PC-3 (cell line): ENCODE measurements at regions of chr1 and their contacts with region 1.

Region 1: GRCh38 chr1:168082008-168082876 is 54.5 kb downstream of the GPR161 start:
- DNase-seq: peak; percentile 89
- ATAC-seq: peak; percentile 92
- H3K4me3 ChIP-seq: no peak overlapping the region
- H3K27ac ChIP-seq: no peak overlapping the region
- H3K4me1 ChIP-seq: peaks cover 6% of the 10 kb centered on the region; the same call in 1 of the 2 replicates
- H3K27me3 ChIP-seq: no peaks in the 10 kb centered on the region
- CTCF ChIP-seq: peak; percentile 97

Region 2: GRCh38 chr1:167797015-167797414 is 285.2 kb before region 1 on chr1:
- CTCF ChIA-PET with region 1: interaction called, 10 read pairs
- POLR2A ChIA-PET with region 1: no interaction called
- intact Hi-C with region 1: no loop called
- DNase-seq: peak; percentile 95
- ATAC-seq: peak; percentile 83
- H3K4me3 ChIP-seq: no peak overlapping the region
- H3K27ac ChIP-seq: peak overlapping the region; percentile 82
- H3K4me1 ChIP-seq: peaks cover 45% of the 10 kb centered on the region
- H3K27me3 ChIP-seq: no peaks in the 10 kb centered on the region
- CTCF ChIP-seq: 0 out of 2 replicates have a peak, but pooled peaks have one; percentile 32

Region 3: DNA sequence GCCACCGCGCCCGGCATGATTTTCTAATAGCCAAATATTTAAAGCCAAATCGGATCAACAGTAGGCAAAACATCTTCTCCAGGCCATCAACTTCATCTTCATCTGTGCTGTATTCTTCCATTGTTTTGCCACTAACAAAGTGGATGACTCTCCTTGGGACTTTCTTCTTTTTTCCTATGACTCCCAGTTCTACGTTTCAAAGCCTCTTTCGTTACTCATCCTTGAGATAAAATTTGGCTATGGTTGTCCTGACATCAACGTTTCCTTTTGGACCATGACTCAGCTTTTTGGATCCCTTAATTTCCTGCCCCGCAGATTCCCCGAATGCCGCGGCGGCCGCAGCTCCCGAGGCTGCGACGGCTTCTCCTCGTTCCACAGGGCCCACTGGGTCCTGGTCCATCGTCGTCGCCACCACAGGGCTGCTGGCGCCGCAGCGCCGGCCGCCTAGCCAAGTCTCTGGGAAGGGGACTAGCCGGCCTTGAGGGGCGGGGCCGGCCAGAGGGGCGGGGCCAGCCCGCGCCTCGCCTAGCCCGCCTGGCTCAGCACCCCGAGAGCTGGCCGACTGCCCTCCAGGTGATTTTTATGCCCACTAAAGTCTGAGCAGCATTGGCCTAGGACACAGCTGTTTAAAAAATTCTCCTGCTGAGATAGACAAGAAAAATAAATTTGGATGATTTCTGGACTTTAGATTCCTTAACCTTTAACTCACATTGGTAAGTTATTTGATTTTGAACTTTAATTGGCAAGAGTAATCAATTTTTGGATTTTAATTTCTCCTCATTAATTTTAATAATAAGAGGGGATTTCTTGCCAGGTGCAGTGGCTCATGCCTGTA is 262.2 kb before region 1 on chr1:
- CTCF ChIA-PET with region 1: no interaction called
- POLR2A ChIA-PET with region 1: no interaction called
- intact Hi-C with region 1: loop called (anchors 5 kb)
- DNase-seq: peak; percentile 93
- ATAC-seq: peak; percentile 99
- H3K4me3 ChIP-seq: peak overlapping the region; percentile 56
- H3K27ac ChIP-seq: peak overlapping the region; percentile 83
- H3K4me1 ChIP-seq: peaks cover 11% of the 10 kb centered on the region
- H3K27me3 ChIP-seq: no peaks in the 10 kb centered on the region
- CTCF ChIP-seq: no peak

Region 4: GRCh38 chr1:168121401-168122011 is 39.3 kb after region 1 on chr1:
- CTCF ChIA-PET with region 1: no interaction called
- POLR2A ChIA-PET with region 1: no interaction called
- intact Hi-C with region 1: no loop called
- DNase-seq: no peak
- ATAC-seq: no peak
- H3K4me3 ChIP-seq: no peak overlapping the region
- H3K27ac ChIP-seq: no peak overlapping the region
- H3K4me1 ChIP-seq: no peaks in the 10 kb centered on the region
- H3K27me3 ChIP-seq: no peaks in the 10 kb centered on the region
- CTCF ChIP-seq: no peak

Region 5: GRCh38 chr1:168145184-168146159 is 63.2 kb after region 1 on chr1:
- CTCF ChIA-PET with region 1: no interaction called
- POLR2A ChIA-PET with region 1: no interaction called
- intact Hi-C with region 1: loop called (anchors 5 kb)
- DNase-seq: peak; percentile 95
- ATAC-seq: peak; percentile 100
- H3K4me3 ChIP-seq: no peak overlapping the region
- H3K27ac ChIP-seq: no peak overlapping the region
- H3K4me1 ChIP-seq: no peaks in the 10 kb centered on the region
- H3K27me3 ChIP-seq: no peaks in the 10 kb centered on the region
- CTCF ChIP-seq: peak; percentile 95

Region 6: GRCh38 chr1:168195199-168196135 is 113.2 kb after region 1 on chr1:
- CTCF ChIA-PET with region 1: no interaction called
- POLR2A ChIA-PET with region 1: no interaction called
- intact Hi-C with region 1: no loop called
- DNase-seq: no peak
- ATAC-seq: no peak
- H3K4me3 ChIP-seq: no peak overlapping the region
- H3K27ac ChIP-seq: no peak overlapping the region
- H3K4me1 ChIP-seq: no peaks in the 10 kb centered on the region
- H3K27me3 ChIP-seq: no peaks in the 10 kb centered on the region
- CTCF ChIP-seq: no peak